ENCODE measurements at regions of chr16 and their contacts with region 1.

Region 1: GRCh38 chr16:66608241-66609138 is 4.0 kb downstream of the CMTM3 start:
- DNase-seq: peak; percentile 88 to 96 (median 94)
- ATAC-seq: peak; percentile 49 to 51
- H3K4me3 ChIP-seq: no peak overlapping the region
- H3K27ac ChIP-seq: no peak overlapping the region
- H3K4me1 ChIP-seq: no peaks in the 10 kb centered on the region
- H3K27me3 ChIP-seq: no peaks in the 10 kb centered on the region

Region 2: DNA sequence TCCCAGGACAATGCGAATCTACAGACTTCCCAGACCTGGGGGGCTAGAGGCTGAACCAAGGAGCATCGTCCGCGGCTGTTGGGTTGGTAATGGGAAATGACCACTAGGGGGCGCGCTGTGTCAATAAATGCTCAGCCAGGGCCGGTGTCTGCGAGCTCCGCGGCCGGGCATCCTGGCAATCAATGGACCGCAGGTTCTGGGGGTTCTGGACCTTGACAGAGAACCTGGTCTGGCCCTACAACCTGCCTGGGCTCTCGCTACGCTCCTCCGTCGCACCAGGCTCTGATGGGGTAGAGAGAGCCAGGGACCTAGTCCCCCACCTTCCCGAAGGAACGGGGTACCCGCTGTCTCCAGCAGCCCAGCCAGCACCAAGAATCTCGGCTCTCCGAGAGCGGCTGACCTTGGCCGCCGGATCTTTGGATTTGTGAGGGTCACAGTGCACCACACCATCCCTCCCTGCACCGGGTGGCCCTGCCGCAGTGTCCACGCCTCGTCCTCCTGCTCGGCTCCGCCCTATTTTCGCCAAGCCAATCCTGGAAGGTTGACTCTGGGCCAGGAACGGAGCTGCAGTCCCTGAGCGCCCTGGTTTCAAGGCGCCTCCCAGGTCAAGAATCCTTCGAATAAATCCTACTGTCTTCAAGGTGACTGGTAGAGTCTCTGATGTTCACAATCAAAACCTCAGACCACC is 201.8 kb before region 1 on chr16:
- intact Hi-C with region 1: loop called in 3 of 4 experiments (anchors 5 to 10 kb)
- DNase-seq: peak; percentile 86 to 95 (median 93)
- ATAC-seq: peak; percentile 88 to 89
- H3K4me3 ChIP-seq: peak overlapping the region; percentile 60
- H3K27ac ChIP-seq: peak overlapping the region; percentile 56
- H3K4me1 ChIP-seq: peaks cover 3% of the 10 kb centered on the region
- H3K27me3 ChIP-seq: no peaks in the 10 kb centered on the region

Region 3: DNA sequence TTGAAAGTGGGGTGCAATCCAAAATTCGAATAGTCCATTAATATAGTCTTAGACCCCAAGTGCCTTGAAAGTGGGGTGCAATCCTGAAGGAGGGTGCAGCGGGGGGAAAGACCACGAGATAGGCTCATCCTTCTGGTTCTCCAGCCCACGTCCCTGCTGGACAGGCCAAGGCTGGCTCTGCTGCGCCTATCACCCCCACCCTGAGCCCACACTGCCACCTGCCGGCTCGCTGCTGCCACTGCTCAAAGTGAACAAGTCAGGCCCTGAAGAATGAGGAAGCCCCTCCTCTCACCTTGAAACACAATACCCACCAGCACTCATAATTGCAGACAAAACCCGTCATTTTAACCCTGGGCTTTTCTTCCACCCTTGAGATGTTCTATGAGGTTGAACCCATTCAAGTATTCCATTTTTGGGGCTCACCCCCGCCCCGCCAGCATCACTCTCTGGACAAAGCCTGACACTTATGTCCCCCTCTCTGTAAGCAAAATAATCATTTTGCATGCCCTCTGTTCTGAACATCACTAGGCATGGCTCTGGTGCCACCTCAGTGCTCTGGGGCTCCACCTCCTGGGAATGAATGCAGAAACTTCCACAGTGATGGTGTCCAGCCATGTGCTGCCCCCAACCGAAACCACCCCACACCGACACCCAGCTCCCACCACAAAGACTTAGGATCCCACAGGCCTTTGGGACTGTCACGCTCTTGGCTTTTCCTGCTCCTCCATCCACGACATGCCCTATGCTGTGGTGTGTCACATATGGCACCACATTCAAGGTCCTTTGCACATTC is 124.6 kb before region 1 on chr16:
- intact Hi-C with region 1: loop called in 3 of 4 experiments (anchors 10 kb)
- DNase-seq: peak; percentile 77 to 93 (median 92)
- ATAC-seq: peak; percentile 46 to 78
- H3K4me3 ChIP-seq: no peak overlapping the region
- H3K27ac ChIP-seq: no peak overlapping the region
- H3K4me1 ChIP-seq: peaks cover 9% of the 10 kb centered on the region
- H3K27me3 ChIP-seq: no peaks in the 10 kb centered on the region

Region 4: DNA sequence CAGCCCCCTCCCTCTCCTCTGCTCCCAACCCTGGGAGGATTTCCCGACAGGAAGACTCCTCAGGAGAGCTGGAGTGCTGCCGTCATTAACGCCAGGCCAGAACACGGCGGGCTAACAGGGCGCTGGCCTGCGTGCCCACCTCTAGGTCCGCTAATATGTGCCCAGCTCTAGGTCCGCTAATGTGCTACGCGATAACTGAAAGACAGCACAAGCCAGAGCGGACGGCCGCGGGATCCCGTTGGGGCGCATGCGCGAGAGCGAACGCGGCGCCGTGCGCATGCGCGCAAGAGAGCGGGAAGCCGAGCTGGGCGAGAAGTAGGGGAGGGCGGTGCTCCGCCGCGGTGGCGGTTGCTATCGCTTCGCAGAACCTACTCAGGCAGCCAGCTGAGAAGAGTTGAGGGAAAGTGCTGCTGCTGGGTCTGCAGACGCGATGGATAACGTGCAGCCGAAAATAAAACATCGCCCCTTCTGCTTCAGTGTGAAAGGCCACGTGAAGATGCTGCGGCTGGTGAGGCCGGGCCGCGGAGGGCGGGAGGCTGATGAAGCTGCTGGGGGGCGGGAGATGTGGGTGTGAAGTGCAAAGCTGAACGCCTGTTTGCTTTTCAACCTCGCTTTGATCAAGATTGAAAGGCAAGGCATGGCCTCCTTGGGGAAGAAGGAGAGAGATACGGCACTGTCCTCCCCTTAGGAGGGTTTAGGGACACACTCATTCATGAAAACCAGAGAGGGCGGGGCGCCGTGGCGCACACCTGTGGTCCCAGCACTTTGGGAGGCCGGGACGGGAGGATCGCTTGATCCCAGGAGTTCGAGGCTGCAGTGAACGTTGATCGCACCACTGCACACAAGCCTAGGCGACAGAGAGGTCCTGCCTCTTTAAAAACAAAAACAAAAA is 56.0 kb before region 1 on chr16 and contains the start of gene CKLF:
- intact Hi-C with region 1: loop called in 1 of 4 experiments (anchors 5 kb)
- DNase-seq: peak; percentile 89 to 96 (median 96)
- ATAC-seq: peak; percentile 89 to 90
- H3K4me3 ChIP-seq: peak within 1 kb of the TSS; percentile 70
- H3K27ac ChIP-seq: peak within 1 kb of the TSS; percentile 100
- H3K4me1 ChIP-seq: peaks cover 6% of the 10 kb centered on the region
- H3K27me3 ChIP-seq: no peaks in the 10 kb centered on the region
- total RNA-seq, gene CKLF: 8.9 to 19.0 (median 13.3) TPM

Region 5: DNA sequence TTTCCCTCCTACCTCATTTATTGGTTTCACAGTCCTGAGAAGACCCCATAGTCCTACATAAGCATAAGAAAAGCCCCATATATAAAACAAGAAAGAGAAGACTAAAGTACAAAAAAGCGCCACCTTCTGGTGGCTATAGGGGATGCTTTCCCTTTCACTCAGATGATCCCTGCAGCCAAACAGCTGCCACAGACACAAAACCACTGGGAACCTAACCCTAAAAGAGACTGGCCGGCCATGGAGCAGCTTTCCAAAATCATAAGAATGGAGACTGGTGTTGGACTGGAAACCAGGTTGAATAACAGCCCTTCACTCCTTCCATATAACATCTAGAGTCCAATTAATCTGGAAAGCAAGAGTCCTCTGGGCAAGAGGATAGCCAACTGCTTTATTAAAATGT is 131.5 kb after region 1 on chr16:
- intact Hi-C with region 1: no loop called
- DNase-seq: no peak
- ATAC-seq: peak in 1 of 2 donors; percentile 17
- H3K4me3 ChIP-seq: no peak overlapping the region
- H3K27ac ChIP-seq: peak overlapping the region; percentile 77
- H3K4me1 ChIP-seq: peaks cover 6% of the 10 kb centered on the region
- H3K27me3 ChIP-seq: no peaks in the 10 kb centered on the region

Region 6: GRCh38 chr16:66872943-66873684 is 264.6 kb after region 1 on chr16:
- intact Hi-C with region 1: loop called in 1 of 4 experiments (anchors 5 kb)
- DNase-seq: peak; percentile 93 to 96 (median 96)
- ATAC-seq: peak; percentile 95 to 96
- H3K4me3 ChIP-seq: peak overlapping the region; percentile 1
- H3K27ac ChIP-seq: peak overlapping the region; percentile 4
- H3K4me1 ChIP-seq: no peaks in the 10 kb centered on the region
- H3K27me3 ChIP-seq: no peaks in the 10 kb centered on the region

Region 7: DNA sequence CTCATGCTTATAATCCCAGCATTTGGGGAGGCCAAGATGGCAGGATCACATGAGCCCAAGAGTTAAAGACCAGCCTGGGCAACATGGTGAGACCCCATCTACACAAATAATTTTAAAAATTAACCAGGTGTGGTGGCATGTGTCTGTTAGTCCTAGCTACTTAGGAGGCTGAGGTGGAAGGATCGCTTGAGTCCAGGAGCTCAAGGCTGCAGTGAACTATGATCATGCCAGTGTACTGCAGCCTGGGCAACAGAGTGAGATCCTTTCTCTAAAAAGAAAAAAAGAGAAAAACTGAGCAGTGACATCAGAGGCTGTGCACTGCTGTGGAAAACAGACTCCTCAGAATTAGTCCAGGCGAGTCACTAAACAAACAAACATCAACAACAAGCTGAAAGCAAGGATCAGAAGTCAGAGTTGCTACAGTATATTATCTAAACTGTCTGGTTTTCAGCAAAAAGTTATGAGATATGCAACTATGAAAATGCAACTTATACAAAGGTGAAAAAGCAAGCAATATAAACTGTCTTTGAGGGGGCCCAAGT is 459.8 kb after region 1 on chr16:
- intact Hi-C with region 1: no loop called
- DNase-seq: no peak
- ATAC-seq: no peak
- H3K4me3 ChIP-seq: no peak overlapping the region
- H3K27ac ChIP-seq: no peak overlapping the region
- H3K4me1 ChIP-seq: no peaks in the 10 kb centered on the region
- H3K27me3 ChIP-seq: no peaks in the 10 kb centered on the region

Measured in right cardiac atrium (tissue), 5 donors.